ENCODE measurements at regions of chr2 and their contacts with region 1.

Region 1: DNA sequence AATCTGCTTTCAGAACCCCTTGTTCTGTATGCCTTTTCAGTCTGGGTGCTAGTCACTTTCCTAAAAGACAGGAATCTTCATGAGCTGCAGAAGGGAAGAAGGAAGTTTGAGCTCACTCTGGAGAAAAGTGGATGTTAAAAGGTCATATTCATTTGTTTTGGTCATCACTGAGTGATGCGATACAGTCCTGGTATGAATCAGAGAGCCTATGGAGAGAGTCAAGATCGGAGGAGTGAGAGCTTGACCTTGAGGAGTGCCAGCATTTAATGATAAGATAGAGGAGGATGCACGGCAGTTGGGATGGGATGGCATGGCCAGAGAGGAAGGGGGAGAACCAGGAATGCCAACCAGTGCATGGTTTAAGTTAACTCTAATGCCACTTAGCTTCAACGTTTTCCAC is 19.6 kb downstream of the USP39 start:
- DNase-seq: no peak
- ATAC-seq: peak in 1 of 2 donors; percentile 36
- H3K4me3 ChIP-seq: no peak overlapping the region
- H3K27ac ChIP-seq: no peak overlapping the region
- H3K4me1 ChIP-seq: no peaks in the 10 kb centered on the region
- H3K27me3 ChIP-seq: no peaks in the 10 kb centered on the region

Region 2: DNA sequence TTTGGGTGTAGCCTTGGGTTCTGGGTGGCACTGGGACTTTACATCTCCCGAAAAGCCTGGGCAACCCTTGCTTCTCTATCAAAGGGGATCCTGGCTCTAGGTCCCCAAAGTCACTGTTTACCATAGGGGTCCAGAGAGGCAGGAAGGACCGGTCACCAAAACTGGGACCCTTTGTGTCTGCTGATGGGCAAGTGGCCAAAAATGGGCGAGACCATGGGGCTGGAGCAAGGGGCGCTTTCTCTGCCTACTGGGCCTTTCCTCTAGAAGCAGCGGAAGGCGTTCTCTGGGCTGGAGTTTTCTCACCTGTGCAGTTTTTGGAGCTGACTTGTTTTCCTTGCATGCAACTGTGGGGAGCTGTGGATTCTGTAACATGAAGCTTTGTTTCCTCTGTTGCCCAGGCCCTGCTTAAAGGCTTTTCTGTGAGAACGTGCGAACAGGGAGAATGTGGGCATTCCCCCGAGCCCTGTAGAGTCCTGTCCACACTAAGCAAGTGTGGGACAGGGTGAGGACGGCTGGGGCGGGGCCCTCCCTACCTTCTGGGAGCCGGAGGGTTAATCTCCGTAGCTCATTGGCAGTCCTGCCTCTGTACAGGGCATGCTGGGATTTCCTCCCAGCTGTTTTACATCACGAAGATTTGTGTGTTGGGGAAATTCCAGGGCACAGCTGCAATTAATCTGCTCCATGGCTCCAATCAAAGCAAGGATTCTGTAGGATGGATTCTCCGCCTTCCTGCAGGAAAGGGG is 358.0 kb before region 1 on chr2:
- intact Hi-C with region 1: no loop called
- DNase-seq: peak; percentile 74 to 92 (median 89)
- ATAC-seq: peak; percentile 89 to 93
- H3K4me3 ChIP-seq: no peak overlapping the region
- H3K27ac ChIP-seq: peak overlapping the region; percentile 43
- H3K4me1 ChIP-seq: peaks cover 13% of the 10 kb centered on the region
- H3K27me3 ChIP-seq: no peaks in the 10 kb centered on the region

Region 3: DNA sequence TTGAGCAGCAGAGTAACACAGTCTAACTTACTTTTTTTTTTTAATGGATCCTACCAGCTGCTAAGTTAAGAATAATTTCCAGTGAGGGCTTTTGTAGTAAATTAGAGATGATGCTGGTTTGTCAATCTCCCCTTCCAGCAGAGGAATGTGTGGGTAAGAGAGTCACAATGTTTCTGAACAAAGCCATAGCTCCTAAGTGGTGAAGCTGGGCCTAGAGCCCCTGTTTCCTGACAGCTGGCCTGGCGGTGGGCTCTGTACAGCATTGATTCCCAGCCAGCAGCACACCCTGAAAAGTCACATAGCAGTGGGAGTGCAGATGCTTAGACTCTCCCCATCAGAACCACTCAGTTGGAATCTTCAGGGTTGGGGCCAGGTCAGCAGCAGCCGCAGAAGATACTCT is 249.9 kb before region 1 on chr2:
- intact Hi-C with region 1: no loop called
- DNase-seq: no peak
- ATAC-seq: no peak
- H3K4me3 ChIP-seq: no peak overlapping the region
- H3K27ac ChIP-seq: no peak overlapping the region
- H3K4me1 ChIP-seq: no peaks in the 10 kb centered on the region
- H3K27me3 ChIP-seq: no peaks in the 10 kb centered on the region

Region 4: GRCh38 chr2:85707304-85707703 is 71.7 kb after region 1 on chr2:
- intact Hi-C with region 1: loop called in 2 of 4 experiments (anchors 5 to 10 kb)
- DNase-seq: peak in 1 of 3 donors; percentile 20
- ATAC-seq: peak in 1 of 2 donors; percentile 38
- H3K4me3 ChIP-seq: no peak overlapping the region
- H3K27ac ChIP-seq: no peak overlapping the region
- H3K4me1 ChIP-seq: peaks cover 21% of the 10 kb centered on the region
- H3K27me3 ChIP-seq: no peaks in the 10 kb centered on the region

Region 5: GRCh38 chr2:85813982-85814801 is 178.6 kb after region 1 on chr2:
- intact Hi-C with region 1: loop called in 3 of 4 experiments (anchors 5 to 10 kb)
- DNase-seq: peak; percentile 89 to 97 (median 96)
- ATAC-seq: peak; percentile 91
- H3K4me3 ChIP-seq: no peak overlapping the region
- H3K27ac ChIP-seq: no peak overlapping the region
- H3K4me1 ChIP-seq: peaks cover 3% of the 10 kb centered on the region
- H3K27me3 ChIP-seq: no peaks in the 10 kb centered on the region

Measured in right cardiac atrium (tissue), 5 donors.